Tibial artery (tissue), 4 donors: ENCODE measurements at regions of chr2 and their contacts with region 1.

Region 1: GRCh38 chr2:95115418-95115817 is 6.2 kb downstream of the MRPS5 start:
- DNase-seq: peak in 1 of 2 donors; percentile 47
- H3K4me3 ChIP-seq: no peak overlapping the region
- H3K27ac ChIP-seq: no peak overlapping the region
- H3K4me1 ChIP-seq: peaks cover 0 to 24% (median 16%) of the 10 kb centered on the region in 4 donors
- H3K27me3 ChIP-seq: no peaks in the 10 kb centered on the region
- CTCF ChIP-seq: peak; percentile 33 to 57

Region 2: GRCh38 chr2:95076784-95077529 is 38.5 kb before region 1 on chr2:
- intact Hi-C with region 1: loop called (anchors 2 kb)
- DNase-seq: peak in 1 of 2 donors; percentile 58
- H3K4me3 ChIP-seq: peak overlapping the region; percentile 22 to 41
- H3K27ac ChIP-seq: no peak overlapping the region
- H3K4me1 ChIP-seq: peaks cover 0 to 10% (median 8%) of the 10 kb centered on the region in 4 donors
- H3K27me3 ChIP-seq: peaks cover 0 to 47% of the 10 kb centered on the region in 2 donors
- CTCF ChIP-seq: peak; percentile 62 to 69